ENCODE measurements at regions of chr14 and their contacts with region 1.

Region 1: GRCh38 chr14:75906676-75907280 is 75.0 kb downstream of the TGFB3 start:
- DNase-seq: peak; percentile 79
- ATAC-seq: peak; percentile 42
- H3K4me3 Mint-ChIP-seq: no peak overlapping the region
- H3K27ac Mint-ChIP-seq: no peak overlapping the region
- H3K4me1 Mint-ChIP-seq: no peaks in the 10 kb centered on the region
- H3K27me3 Mint-ChIP-seq: no peaks in the 10 kb centered on the region
- CTCF ChIP-seq: peak; percentile 89

Region 2: GRCh38 chr14:75864352-75864751 is 42.4 kb before region 1 on chr14:
- CTCF ChIA-PET with region 1: interaction called, 12 read pairs
- POLR2A ChIA-PET with region 1: no interaction called
- intact Hi-C with region 1: no loop called
- DNase-seq: no peak
- ATAC-seq: no peak
- H3K4me3 Mint-ChIP-seq: no peak overlapping the region
- H3K27ac Mint-ChIP-seq: no peak overlapping the region
- H3K4me1 Mint-ChIP-seq: peaks cover 6% of the 10 kb centered on the region
- H3K27me3 Mint-ChIP-seq: no peaks in the 10 kb centered on the region
- CTCF ChIP-seq: no peak

Region 3: DNA sequence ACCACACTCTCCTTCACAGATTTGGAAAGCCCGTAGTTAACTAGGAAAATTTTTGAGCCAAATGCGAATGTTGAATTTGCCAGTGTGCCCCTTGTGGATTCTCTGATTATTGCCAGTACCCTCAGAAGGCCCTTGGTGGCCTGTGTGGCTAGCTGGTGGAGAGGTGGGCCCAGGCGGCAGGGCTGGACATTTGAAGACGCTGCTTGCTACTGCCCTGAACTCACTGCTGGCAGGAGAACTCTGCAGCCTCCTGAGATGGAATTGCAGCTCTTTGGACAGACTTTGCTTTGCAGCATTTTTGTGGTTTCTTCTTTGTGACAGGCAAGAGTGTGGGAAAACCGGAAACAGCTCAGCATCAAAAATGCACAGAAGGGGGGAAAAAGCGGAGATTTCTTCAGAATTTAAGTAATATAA is 22.6 kb before region 1 on chr14:
- CTCF ChIA-PET with region 1: interaction called, 35 read pairs
- POLR2A ChIA-PET with region 1: no interaction called
- intact Hi-C with region 1: no loop called
- DNase-seq: no peak
- ATAC-seq: no peak
- H3K4me3 Mint-ChIP-seq: no peak overlapping the region
- H3K27ac Mint-ChIP-seq: no peak overlapping the region
- H3K4me1 Mint-ChIP-seq: peaks cover under 1% of the 10 kb centered on the region
- H3K27me3 Mint-ChIP-seq: no peaks in the 10 kb centered on the region
- CTCF ChIP-seq: no peak

Region 4: GRCh38 chr14:75917322-75917945 is 10.7 kb after region 1 on chr14:
- CTCF ChIA-PET with region 1: interaction called, 31 read pairs
- POLR2A ChIA-PET with region 1: no interaction called
- intact Hi-C with region 1: no loop called
- DNase-seq: no peak
- ATAC-seq: no peak
- H3K4me3 Mint-ChIP-seq: no peak overlapping the region
- H3K27ac Mint-ChIP-seq: no peak overlapping the region
- H3K4me1 Mint-ChIP-seq: no peaks in the 10 kb centered on the region
- H3K27me3 Mint-ChIP-seq: no peaks in the 10 kb centered on the region
- CTCF ChIP-seq: no peak

Region 5: DNA sequence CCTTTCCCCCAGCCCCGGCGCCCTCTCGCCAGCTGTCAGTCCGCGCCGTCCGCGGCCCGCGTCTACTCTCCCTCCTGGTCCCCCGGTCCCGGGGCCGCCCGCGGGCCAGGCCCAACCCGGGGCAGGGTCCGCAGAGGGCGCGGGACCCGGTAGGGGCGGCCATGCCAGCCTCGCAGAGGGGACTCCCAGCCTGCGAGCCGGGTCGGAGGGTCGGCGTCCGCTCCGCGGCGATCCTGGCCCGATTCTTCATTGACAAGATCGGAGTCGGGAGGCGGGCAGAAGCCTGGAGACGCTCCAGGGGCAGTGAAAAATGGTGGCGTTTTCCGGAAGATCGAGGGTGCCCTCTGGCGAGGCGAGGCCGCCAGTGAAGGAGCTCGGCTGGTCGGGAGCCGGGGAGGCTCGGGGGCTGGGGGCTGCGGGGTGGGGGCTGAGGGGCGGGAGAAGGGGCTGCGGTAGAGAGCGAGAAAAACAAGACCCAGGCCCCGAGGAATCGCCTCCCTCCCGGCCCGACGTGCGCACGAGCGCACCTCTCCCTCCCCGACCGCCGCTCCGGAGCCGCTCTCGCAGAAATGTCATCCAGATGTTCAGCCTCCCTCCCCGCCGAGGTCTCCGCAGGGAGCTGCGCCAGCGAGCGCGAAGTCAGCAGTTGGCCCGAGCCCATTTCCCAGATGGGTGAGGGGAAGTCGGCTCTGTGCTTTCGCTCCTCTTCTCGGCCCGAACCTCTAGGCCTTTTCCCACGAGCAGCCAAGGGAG is 75.7 kb after region 1 on chr14:
- CTCF ChIA-PET with region 1: interaction called, 143 read pairs
- POLR2A ChIA-PET with region 1: interaction called, 3 read pairs
- intact Hi-C with region 1: loop called (anchors 5 kb)
- DNase-seq: peak; percentile 76
- ATAC-seq: peak; percentile 64
- H3K4me3 Mint-ChIP-seq: peak overlapping the region; percentile 80
- H3K27ac Mint-ChIP-seq: peak overlapping the region; percentile 81
- H3K4me1 Mint-ChIP-seq: peaks cover 44% of the 10 kb centered on the region
- H3K27me3 Mint-ChIP-seq: no peaks in the 10 kb centered on the region
- CTCF ChIP-seq: peak; percentile 68

Measured in activated CD8-positive, alpha-beta T cell treated with anti-CD3 and anti-CD28 coated beads for 36 hours (primary cell).